Psoas muscle (tissue), 8 donors: ENCODE measurements at regions of chr15 and their contacts with region 1.

Region 1: DNA sequence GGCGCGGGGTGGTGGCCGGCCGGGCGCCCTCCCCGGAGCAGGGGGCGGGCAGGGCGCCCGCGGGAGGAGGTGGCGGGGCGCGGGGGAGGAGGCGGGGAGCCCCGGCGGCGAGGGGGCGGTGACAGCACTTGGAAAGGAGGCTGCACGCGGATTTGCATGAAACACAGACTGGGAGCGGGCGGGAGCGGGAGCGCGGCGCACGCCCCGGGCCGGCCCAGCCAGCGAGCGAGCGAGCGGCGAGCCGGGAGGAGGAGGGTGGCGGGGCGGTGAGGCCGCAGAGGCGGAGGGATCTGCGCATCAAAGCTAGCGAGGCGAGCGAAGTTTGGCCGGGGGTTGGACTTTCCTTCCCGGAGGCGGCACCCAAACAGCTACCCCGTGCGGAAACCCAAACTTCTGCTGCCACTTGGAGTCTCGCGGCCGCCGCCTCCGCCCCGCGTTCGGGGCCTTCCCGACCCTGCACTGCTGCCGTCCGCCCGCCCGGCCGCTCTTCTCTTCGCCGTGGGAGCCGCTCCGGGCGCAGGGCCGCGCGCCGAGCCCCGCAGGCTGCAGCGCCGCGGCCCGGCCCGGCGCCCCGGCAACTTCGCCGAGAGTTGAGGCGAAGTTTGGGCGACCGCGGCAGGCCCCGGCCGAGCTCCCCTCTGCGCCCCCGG is at the start of gene SMAD3:
- DNase-seq: peak; percentile 92 to 96
- ATAC-seq: peak; percentile 80 to 84 (median 82)
- H3K4me3 ChIP-seq: peak within 1 kb of the TSS; percentile 91
- H3K27ac ChIP-seq: peak within 1 kb of the TSS; percentile 92
- H3K4me1 ChIP-seq: peaks cover 35% of the 10 kb centered on the region
- H3K27me3 ChIP-seq: no peaks in the 10 kb centered on the region
- CTCF ChIP-seq: no peak
- total RNA-seq, gene SMAD3: 25.7 to 47.6 (median 44.0) TPM

Region 2: GRCh38 chr15:66946578-66947164 is 118.9 kb before region 1 on chr15:
- intact Hi-C with region 1: loop called (anchors 2 to 10 kb)
- DNase-seq: peak; percentile 65 to 82
- ATAC-seq: peak; percentile 64 to 92 (median 80)
- H3K4me3 ChIP-seq: no peak overlapping the region
- H3K27ac ChIP-seq: no peak overlapping the region
- H3K4me1 ChIP-seq: peaks cover 4% of the 10 kb centered on the region
- H3K27me3 ChIP-seq: no peaks in the 10 kb centered on the region
- CTCF ChIP-seq: peak; percentile 98

Region 3: DNA sequence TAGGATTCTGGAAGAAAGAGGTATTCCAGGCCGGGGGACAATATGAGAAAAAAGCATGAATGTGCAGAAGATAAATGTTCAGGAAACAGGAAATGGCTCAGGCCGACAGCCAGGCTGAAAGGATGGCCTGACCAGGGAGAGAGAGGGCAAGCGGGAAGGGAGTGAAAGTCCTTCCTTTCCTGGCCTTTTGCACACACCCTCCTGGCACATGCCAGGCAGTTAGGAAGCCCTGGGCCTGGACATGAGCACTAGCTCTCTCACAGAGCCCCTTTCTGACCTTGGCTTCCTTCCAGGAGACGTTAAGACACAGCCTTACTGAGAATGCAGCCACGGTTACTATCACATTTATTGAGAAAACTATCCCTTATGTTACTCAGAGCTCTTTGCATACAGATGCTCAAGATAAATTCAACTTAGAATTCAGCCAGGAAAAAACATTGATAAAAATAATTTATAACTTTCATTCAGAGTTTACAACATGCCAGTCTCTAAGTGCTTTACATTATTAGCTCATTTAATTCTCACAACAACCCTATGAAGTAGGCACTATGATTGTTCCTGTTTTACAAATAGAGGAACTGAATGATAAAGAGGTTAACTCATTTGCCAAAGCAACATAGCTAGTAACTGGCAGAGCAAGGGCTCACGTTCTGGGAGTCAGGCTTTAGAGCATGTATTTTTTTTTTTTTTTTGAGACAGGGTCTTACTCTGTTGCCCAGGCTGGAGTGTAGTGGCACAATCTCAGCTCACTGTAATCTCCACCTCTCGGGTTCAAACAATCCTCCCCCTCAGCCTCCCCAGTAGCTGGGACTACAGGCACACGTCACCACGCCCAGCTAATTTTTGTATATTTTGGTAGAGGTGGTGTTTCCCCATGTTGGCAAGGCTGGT is 39.6 kb before region 1 on chr15:
- intact Hi-C with region 1: loop called in 1 of 2 experiments (anchors 5 kb)
- DNase-seq: peak; percentile 56 to 67
- ATAC-seq: peak in 3 of 4 donors; percentile 25 to 35 (median 33)
- H3K4me3 ChIP-seq: no peak overlapping the region
- H3K27ac ChIP-seq: peak overlapping the region; percentile 76
- H3K4me1 ChIP-seq: peaks cover 31% of the 10 kb centered on the region
- H3K27me3 ChIP-seq: no peaks in the 10 kb centered on the region
- CTCF ChIP-seq: no peak

Region 4: GRCh38 chr15:67188551-67189218 is 123.1 kb after region 1 on chr15:
- intact Hi-C with region 1: loop called (anchors 5 kb)
- DNase-seq: peak in 1 of 2 donors; percentile 64
- ATAC-seq: no peak
- H3K4me3 ChIP-seq: no peak overlapping the region
- H3K27ac ChIP-seq: peak overlapping the region; percentile 90
- H3K4me1 ChIP-seq: peaks cover 97% of the 10 kb centered on the region
- H3K27me3 ChIP-seq: no peaks in the 10 kb centered on the region
- CTCF ChIP-seq: no peak

Region 5: GRCh38 chr15:67254238-67255175 is 188.9 kb after region 1 on chr15 and contains the starts of genes AAGAB and IQCH:
- intact Hi-C with region 1: loop called (anchors 5 to 10 kb)
- DNase-seq: peak; percentile 99
- ATAC-seq: peak; percentile 96 to 99 (median 98)
- H3K4me3 ChIP-seq: peak within 1 kb of the TSS; percentile 87
- H3K27ac ChIP-seq: peak within 1 kb of the TSS; percentile 94
- H3K4me1 ChIP-seq: peaks cover 18% of the 10 kb centered on the region
- H3K27me3 ChIP-seq: no peaks in the 10 kb centered on the region
- CTCF ChIP-seq: no peak
- total RNA-seq, gene AAGAB: 34.3 to 46.1 (median 42.7) TPM
- total RNA-seq, gene IQCH: 0.37 to 1.0 (median 0.75) TPM

Region 6: DNA sequence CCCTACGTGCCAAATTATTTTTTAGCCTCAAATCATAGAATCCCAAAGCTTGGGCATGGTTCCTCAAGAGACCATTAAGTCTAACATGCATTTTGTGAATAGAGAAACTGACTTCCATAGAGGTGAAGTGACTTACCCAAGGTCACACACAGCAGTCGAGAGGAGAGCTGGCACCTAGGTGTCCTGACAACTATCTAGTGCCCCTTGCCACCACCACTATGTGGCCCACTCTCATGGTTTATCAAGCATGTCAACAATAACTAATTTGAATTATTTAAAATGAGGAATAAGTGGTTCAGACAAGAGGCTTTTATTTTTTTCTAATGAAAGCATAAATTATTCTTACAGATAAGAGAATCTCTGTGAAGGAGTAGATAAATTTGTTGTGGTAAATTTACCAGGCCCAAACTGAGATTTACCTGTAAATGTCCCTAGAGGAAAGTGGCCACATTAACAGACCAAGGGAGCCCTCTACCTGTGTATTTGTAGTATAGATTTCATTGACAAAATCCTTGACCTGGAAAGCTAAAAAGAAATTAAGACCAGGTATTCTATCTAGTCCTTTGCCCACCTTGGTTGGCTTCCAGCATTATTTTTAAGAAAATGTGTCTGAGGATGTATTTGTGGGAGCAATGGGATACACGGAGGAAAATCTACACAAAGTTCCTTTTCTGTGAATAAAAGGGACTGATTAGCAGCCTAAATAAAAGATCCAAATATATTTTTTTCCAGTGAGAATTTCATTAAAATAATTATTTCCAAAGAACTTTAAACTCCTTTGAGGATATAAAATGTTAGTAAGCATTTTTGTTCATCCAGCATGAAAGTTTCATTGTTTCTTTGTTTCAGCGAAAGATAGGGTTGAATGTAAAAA is 238.2 kb after region 1 on chr15:
- intact Hi-C with region 1: loop called in 1 of 2 experiments (anchors 10 kb)
- DNase-seq: no peak
- ATAC-seq: peak; percentile 56 to 90 (median 76)
- H3K4me3 ChIP-seq: no peak overlapping the region
- H3K27ac ChIP-seq: no peak overlapping the region
- H3K4me1 ChIP-seq: peaks cover 5% of the 10 kb centered on the region
- H3K27me3 ChIP-seq: no peaks in the 10 kb centered on the region
- CTCF ChIP-seq: peak; percentile 70